ENCODE measurements at regions of chr19 and their contacts with region 1.

Region 1: DNA sequence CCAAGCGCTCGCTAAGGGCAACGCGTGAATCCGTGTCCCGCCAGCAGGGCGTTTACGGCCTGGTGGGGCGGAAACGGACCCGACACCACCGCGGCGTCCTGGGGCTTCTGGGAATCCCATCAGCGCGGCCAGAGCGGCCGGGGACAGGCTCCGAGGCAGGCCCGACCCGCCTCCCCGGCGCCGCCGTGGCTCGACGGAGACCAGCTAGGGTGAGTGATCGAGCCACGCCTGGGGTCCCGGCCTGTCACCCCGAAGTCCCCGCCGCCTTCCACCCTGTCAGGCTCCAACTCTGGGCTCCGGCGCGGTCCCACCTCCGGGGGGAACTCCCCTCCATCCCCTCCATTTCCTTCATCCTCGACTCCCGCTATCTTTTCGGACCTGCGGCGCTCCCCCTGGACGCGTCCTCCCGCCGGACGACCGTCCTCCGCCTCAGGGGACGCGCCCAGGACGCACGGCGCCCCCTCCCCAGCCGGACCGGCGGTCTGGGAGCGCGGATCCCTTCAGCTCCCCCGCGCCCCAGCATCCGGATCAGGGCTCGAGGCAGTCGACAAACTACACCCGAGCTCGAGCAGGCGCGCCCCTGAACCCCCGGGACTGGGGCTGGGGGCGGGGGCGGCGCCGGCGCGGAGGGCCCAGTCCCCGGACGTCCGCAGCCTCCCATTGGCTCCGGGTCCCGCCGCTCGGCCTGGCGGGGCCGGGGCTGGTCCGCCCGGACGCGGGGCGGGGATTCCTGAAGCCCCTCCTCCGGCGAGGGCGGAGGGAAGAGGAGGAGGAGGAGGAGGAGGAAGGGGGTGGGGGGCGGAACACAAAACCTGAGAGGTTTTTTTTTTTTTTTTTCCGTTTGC is 638 bp upstream of the BICRA start:
- DNase-seq: peak; percentile 82
- ATAC-seq: peak; percentile 91
- H3K4me3 ChIP-seq: peak overlapping the region; percentile 90 to 97 (median 94)
- H3K27ac ChIP-seq: peak overlapping the region; percentile 89
- H3K4me1 ChIP-seq: peaks cover 24% of the 10 kb centered on the region
- H3K27me3 ChIP-seq: no peaks in the 10 kb centered on the region; a peak in 2 of 5 replicates
- CTCF ChIP-seq: no peak; the same call in none of the 2 replicates
- EP300 ChIP-seq: no peak
- POLR2A ChIP-seq: peak; percentile 61 to 78; a peak in 3 of 4 replicates
- RAD21 ChIP-seq: 0 out of 2 replicates have a peak, but pooled peaks have one; percentile 50

Region 2: DNA sequence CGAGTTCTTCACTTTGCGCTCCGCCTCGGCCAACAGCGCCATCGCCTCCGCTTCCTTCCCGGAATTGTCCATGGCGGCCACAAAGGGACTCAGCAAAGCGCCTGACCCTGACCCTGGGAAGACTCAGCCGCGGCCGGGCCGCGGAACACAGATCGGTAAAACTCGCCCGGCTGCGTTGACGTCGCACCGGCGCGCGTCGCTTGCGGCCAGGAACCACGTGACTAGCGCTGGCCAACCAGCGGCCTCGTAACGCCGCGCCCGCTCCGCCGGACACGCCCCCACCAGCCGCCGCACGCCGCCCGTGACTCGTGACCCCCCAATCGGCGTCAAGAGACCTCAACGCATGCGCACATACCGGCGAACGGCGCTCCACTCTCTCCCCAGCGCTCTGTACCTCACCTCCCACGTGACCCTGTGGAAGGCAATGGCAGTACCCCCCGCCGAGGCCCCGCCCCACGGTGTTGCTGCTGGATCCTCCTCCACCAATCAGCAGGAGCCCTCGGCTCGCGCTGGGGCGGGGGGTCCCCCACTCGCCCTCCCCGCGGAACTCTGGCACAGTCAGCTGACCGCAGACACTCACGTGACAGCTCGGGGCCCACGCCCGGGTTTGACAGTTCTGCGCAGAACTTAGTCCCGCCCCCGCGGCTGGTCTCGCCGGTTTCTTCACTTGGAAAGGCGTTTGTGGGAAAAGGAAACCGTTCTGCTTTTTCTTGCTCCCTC is 93.3 kb before region 1 on chr19 and contains the start of gene NAPA:
- CTCF ChIA-PET with region 1: no interaction called
- POLR2A ChIA-PET with region 1: interaction called, 6 read pairs
- in situ Hi-C with region 1: no loop called
- intact Hi-C with region 1: loop called (anchors 5 kb)
- DNase-seq: peak; percentile 99
- ATAC-seq: peak; percentile 87
- H3K4me3 ChIP-seq: peak within 1 kb of the TSS; percentile 93 to 99 (median 98)
- H3K27ac ChIP-seq: peak within 1 kb of the TSS; percentile 87
- H3K4me1 ChIP-seq: peaks cover 40% of the 10 kb centered on the region
- H3K27me3 ChIP-seq: no peaks in the 10 kb centered on the region; a peak in 1 of 5 replicates
- CTCF ChIP-seq: no peak
- EP300 ChIP-seq: peak in 1 of 2 experiments; percentile 43; a peak in 2 of 4 replicates
- POLR2A ChIP-seq: peak; percentile 57 to 89
- RAD21 ChIP-seq: peak; percentile 69
- total RNA-seq, gene NAPA: 32.6 and 36.5 TPM in 2 replicates

Region 3: GRCh38 chr19:47582320-47582909 is 25.9 kb before region 1 on chr19:
- CTCF ChIA-PET with region 1: no interaction called
- POLR2A ChIA-PET with region 1: no interaction called
- in situ Hi-C with region 1: no loop called
- intact Hi-C with region 1: no loop called
- DNase-seq: no peak
- ATAC-seq: no peak
- H3K4me3 ChIP-seq: no peak overlapping the region
- H3K27ac ChIP-seq: no peak overlapping the region
- H3K4me1 ChIP-seq: no peaks in the 10 kb centered on the region
- H3K27me3 ChIP-seq: no peaks in the 10 kb centered on the region
- CTCF ChIP-seq: no peak
- EP300 ChIP-seq: no peak
- POLR2A ChIP-seq: no peak
- RAD21 ChIP-seq: no peak

Region 4: GRCh38 chr19:47647804-47648141 is 39.5 kb after region 1 on chr19:
- CTCF ChIA-PET with region 1: no interaction called
- POLR2A ChIA-PET with region 1: interaction called, 10 read pairs
- in situ Hi-C with region 1: no loop called
- intact Hi-C with region 1: no loop called
- DNase-seq: no peak
- ATAC-seq: no peak
- H3K4me3 ChIP-seq: peak overlapping the region in 1 of 3 experiments; percentile 51; a peak in 1 of 6 replicates
- H3K27ac ChIP-seq: peak overlapping the region; percentile 78
- H3K4me1 ChIP-seq: peaks cover 24% of the 10 kb centered on the region
- H3K27me3 ChIP-seq: no peaks in the 10 kb centered on the region
- CTCF ChIP-seq: no peak
- EP300 ChIP-seq: no peak
- POLR2A ChIP-seq: no peak
- RAD21 ChIP-seq: no peak